ENCODE measurements at regions of chr10 and their contacts with region 1.

Region 1: GRCh38 chr10:12369982-12370381 is 20.6 kb downstream of the CAMK1D start:
- DNase-seq: no peak
- ATAC-seq: no peak
- H3K4me3 Mint-ChIP-seq: no peak overlapping the region
- H3K27ac Mint-ChIP-seq: no peak overlapping the region
- H3K4me1 Mint-ChIP-seq: peaks cover 16% of the 10 kb centered on the region
- H3K27me3 Mint-ChIP-seq: no peaks in the 10 kb centered on the region

Region 2: GRCh38 chr10:12348870-12349628 is 20.9 kb before region 1 on chr10 and contains the start of gene CAMK1D:
- CTCF ChIA-PET with region 1: interaction called, 5 read pairs
- POLR2A ChIA-PET with region 1: interaction called, 11 read pairs
- DNase-seq: peak; percentile 93
- ATAC-seq: peak; percentile 76
- H3K4me3 Mint-ChIP-seq: peak within 1 kb of the TSS; percentile 89
- H3K27ac Mint-ChIP-seq: peak within 1 kb of the TSS; percentile 90
- H3K4me1 Mint-ChIP-seq: peaks cover 37% of the 10 kb centered on the region
- H3K27me3 Mint-ChIP-seq: peaks cover 41% of the 10 kb centered on the region
- total RNA-seq, gene CAMK1D: 3.4 to 4.2 TPM

Region 3: DNA sequence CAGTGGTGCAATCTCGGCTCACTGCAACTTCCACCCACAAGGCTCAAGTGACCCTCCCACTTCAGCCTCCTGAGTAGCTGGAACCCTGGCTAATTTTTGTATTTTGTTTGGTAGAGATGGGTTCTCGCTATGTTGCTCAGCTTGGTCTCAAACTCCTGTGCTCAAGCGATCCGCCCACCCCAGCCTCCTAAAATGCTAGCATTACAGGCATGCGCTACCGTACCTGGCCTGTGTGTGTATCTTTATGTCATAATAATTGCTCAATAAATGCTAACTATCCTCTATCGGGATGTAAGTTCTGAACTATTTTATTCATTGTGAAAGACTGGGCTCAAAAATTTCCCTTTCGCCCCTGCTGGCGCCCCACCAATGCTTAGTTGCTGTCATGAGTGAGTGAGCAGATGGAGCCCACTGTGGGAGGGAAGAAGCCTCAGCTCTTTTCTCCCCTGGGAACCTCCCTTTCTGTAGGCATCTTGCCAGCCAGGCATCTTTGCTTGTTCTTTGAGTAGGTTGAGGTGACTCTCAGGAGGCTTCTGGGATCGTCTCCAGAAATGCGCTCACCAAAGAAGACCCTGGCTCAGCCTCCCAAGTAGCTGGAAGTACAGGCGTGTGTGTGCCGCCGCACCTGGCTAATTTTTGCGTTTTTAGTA is 17.7 kb after region 1 on chr10:
- CTCF ChIA-PET with region 1: no interaction called
- POLR2A ChIA-PET with region 1: no interaction called
- DNase-seq: no peak
- ATAC-seq: no peak
- H3K4me3 Mint-ChIP-seq: no peak overlapping the region
- H3K27ac Mint-ChIP-seq: no peak overlapping the region
- H3K4me1 Mint-ChIP-seq: no peaks in the 10 kb centered on the region
- H3K27me3 Mint-ChIP-seq: peaks cover 4% of the 10 kb centered on the region

Region 4: DNA sequence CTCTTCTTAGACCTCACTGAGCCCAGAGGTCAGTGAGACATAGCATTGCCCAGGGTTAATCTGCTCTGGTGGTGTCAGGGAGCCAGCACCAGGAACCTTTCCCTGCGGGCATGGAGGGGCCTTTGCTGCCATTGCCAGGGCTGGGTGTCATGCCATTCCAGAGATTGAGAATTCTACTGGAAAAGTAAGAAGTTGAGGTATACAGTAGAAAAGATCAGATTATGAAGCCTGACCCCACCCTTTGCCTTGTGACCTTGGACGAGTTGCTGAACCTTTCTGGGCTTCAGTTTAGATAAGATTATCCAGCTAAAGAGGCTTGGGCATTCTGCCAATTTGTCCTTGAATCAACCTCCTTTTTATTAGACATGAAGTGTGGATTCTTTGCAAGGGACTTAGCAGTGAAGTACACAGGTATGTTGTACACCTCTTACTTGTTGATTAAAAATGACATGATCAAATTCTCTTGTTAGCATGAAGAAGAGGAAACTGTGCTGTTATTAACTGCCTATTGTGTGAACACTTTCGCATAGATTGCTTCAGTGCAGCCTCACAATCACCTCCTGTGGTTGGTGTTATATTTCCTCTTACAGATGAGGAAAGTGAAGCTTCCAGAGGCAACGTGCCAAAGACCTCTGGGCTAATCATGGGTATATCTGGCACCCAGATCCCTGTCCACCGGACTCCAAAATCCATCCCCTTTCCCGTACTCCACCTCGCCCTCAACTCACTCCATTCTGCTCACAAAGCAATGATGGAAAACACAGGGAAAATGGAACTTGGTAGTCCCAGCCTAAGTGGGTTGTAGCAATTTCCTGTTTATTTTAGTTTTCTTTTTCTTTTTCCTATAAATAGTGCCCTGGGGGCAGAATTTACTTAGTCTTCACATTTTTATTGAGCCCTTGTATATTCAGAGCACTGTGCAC is 130.7 kb after region 1 on chr10:
- CTCF ChIA-PET with region 1: no interaction called
- POLR2A ChIA-PET with region 1: no interaction called
- DNase-seq: peak; percentile 17
- ATAC-seq: no peak
- H3K4me3 Mint-ChIP-seq: no peak overlapping the region
- H3K27ac Mint-ChIP-seq: no peak overlapping the region
- H3K4me1 Mint-ChIP-seq: peaks cover 10% of the 10 kb centered on the region
- H3K27me3 Mint-ChIP-seq: peaks cover 7% of the 10 kb centered on the region

Measured in activated CD8-positive, alpha-beta T cell treated with anti-CD3 and anti-CD28 coated beads, Interleukin-2, amount 10 ng/mL, durations not matched to agents 7 days and 5 days (primary cell).